HCT116 (cell line): ENCODE measurements at regions of chr2 and their contacts with region 1.

Region 1: GRCh38 chr2:138827426-138828054 is 47.4 kb upstream of the NXPH2 start:
- DNase-seq: peak; percentile 77
- ATAC-seq: peak; percentile 81
- H3K4me3 ChIP-seq: no peak overlapping the region
- H3K27ac ChIP-seq: no peak overlapping the region
- H3K4me1 ChIP-seq: no peaks in the 10 kb centered on the region
- H3K27me3 ChIP-seq: no peaks in the 10 kb centered on the region
- CTCF ChIP-seq: peak; percentile 53 to 74 (median 62); a peak in 5 of 6 replicates
- POLR2A ChIP-seq: no peak
- RAD21 ChIP-seq: peak; percentile 77

Region 2: GRCh38 chr2:137888845-137889244 is 938.7 kb before region 1 on chr2:
- CTCF ChIA-PET with region 1: interaction called, 22 read pairs
- POLR2A ChIA-PET with region 1: no interaction called
- RAD21 ChIA-PET with region 1: interaction called, 3 to 4 read pairs
- intact Hi-C with region 1: loop called (anchors 1 kb)
- DNase-seq: peak; percentile 10
- ATAC-seq: peak; percentile 69
- H3K4me3 ChIP-seq: no peak overlapping the region
- H3K27ac ChIP-seq: no peak overlapping the region
- H3K4me1 ChIP-seq: peaks cover 0 to 4% of the 10 kb centered on the region in 2 experiments; a peak in 1 of 4 replicates
- H3K27me3 ChIP-seq: no peaks in the 10 kb centered on the region
- CTCF ChIP-seq: peak; percentile 45 to 74 (median 68); a peak in 5 of 6 replicates
- POLR2A ChIP-seq: no peak
- RAD21 ChIP-seq: peak; percentile 63

Region 3: DNA sequence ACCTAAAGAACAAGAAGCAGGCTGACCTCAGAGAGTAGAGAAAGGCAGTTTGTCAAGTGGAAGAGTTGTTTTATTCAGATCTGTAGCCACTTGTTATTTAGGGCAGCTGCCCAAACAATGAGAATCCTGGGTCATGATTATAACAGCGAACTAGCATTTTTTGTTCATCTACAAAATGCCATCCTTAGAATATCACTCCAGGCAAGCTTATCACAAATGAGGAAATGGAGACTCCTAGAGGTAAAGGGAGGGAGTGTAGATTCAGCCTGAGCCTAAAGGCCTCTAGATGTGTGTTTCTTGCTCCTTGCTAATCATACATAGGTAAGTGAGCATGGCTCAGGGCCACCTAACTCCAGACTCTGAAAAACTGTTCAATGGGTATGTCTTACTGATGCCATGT is 737.2 kb before region 1 on chr2:
- CTCF ChIA-PET with region 1: no interaction called
- POLR2A ChIA-PET with region 1: no interaction called
- RAD21 ChIA-PET with region 1: no interaction called
- intact Hi-C with region 1: loop called (anchors 10 kb)
- DNase-seq: peak; percentile 22
- ATAC-seq: peak; percentile 92
- H3K4me3 ChIP-seq: no peak overlapping the region
- H3K27ac ChIP-seq: no peak overlapping the region
- H3K4me1 ChIP-seq: no peaks in the 10 kb centered on the region
- H3K27me3 ChIP-seq: no peaks in the 10 kb centered on the region
- CTCF ChIP-seq: peak; percentile 54 to 64 (median 61); a peak in 4 of 6 replicates
- POLR2A ChIP-seq: no peak
- RAD21 ChIP-seq: peak; percentile 76

Region 4: DNA sequence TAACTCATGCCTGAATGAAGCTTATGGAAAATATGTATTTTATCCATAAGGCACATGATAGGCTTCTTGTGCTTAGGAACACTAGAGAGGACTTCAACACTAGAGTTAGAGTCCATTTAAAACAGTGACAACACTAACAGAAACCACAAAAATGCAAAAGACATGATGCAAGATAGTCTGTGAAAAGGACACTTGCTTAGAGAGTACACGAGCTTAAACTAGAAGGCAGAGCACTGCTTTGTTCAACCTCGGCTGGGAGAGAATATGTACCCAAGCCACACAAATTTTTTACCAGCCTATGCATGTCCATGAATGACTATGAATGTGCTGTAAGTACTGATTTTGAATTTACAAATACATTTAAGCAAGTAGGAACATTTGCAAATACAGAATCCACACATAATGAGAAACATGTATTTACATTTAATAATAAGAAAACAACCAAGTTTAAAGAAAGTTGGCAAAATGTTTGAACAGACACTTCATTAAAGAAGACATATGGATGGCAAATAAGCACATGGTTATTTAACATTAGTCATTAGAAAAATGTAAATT is 195.4 kb before region 1 on chr2:
- CTCF ChIA-PET with region 1: no interaction called
- POLR2A ChIA-PET with region 1: no interaction called
- RAD21 ChIA-PET with region 1: no interaction called
- intact Hi-C with region 1: no loop called
- DNase-seq: no peak
- ATAC-seq: no peak
- H3K4me3 ChIP-seq: no peak overlapping the region
- H3K27ac ChIP-seq: no peak overlapping the region
- H3K4me1 ChIP-seq: no peaks in the 10 kb centered on the region
- H3K27me3 ChIP-seq: no peaks in the 10 kb centered on the region
- CTCF ChIP-seq: no peak
- POLR2A ChIP-seq: no peak
- RAD21 ChIP-seq: no peak

Region 5: GRCh38 chr2:138787053-138787666 is 40.4 kb before region 1 on chr2:
- CTCF ChIA-PET with region 1: interaction called, 18 read pairs
- POLR2A ChIA-PET with region 1: no interaction called
- RAD21 ChIA-PET with region 1: interaction called, 3 read pairs
- intact Hi-C with region 1: no loop called
- DNase-seq: peak; percentile 31
- ATAC-seq: peak; percentile 69; the same call in 1 of the 2 replicates
- H3K4me3 ChIP-seq: no peak overlapping the region
- H3K27ac ChIP-seq: no peak overlapping the region
- H3K4me1 ChIP-seq: no peaks in the 10 kb centered on the region
- H3K27me3 ChIP-seq: no peaks in the 10 kb centered on the region
- CTCF ChIP-seq: peak; percentile 68 to 86 (median 72)
- POLR2A ChIP-seq: no peak
- RAD21 ChIP-seq: peak; percentile 83

Region 6: DNA sequence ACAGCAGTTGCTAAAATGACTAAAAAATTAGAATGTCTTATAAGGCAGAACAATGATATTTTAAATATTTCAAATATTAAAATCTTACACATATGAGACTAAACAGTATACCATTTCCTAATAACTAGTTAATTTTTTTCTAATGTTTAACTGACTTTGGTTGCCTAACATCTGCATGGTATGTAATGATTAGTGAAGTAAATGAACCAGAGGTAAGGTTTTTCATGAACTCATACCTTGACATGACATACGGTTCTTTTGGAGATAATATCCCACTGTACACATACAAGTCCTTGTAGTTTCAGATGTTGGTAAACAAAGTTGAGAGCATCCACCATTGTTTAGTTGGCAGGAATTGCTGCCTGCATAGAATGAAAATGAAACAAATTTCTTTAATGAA is 1943.1 kb after region 1 on chr2:
- CTCF ChIA-PET with region 1: no interaction called
- POLR2A ChIA-PET with region 1: no interaction called
- RAD21 ChIA-PET with region 1: no interaction called
- intact Hi-C with region 1: no loop called
- DNase-seq: no peak
- ATAC-seq: no peak
- H3K4me3 ChIP-seq: no peak overlapping the region
- H3K27ac ChIP-seq: no peak overlapping the region
- H3K4me1 ChIP-seq: no peaks in the 10 kb centered on the region
- H3K27me3 ChIP-seq: no peaks in the 10 kb centered on the region
- CTCF ChIP-seq: no peak
- POLR2A ChIP-seq: no peak
- RAD21 ChIP-seq: no peak